H1 (cell line): ENCODE measurements at regions of chr12 and their contacts with region 1.

Region 1: GRCh38 chr12:53031617-53032016 is 18.2 kb upstream of the TNS2 start:
- DNase-seq: no peak
- H3K4me3 ChIP-seq: no peak overlapping the region
- H3K27ac ChIP-seq: no peak overlapping the region
- H3K4me1 ChIP-seq: no peaks in the 10 kb centered on the region
- H3K27me3 ChIP-seq: no peaks in the 10 kb centered on the region
- CTCF ChIP-seq: no peak
- EP300 ChIP-seq: no peak
- POLR2A ChIP-seq: no peak
- RAD21 ChIP-seq: no peak

Region 2: DNA sequence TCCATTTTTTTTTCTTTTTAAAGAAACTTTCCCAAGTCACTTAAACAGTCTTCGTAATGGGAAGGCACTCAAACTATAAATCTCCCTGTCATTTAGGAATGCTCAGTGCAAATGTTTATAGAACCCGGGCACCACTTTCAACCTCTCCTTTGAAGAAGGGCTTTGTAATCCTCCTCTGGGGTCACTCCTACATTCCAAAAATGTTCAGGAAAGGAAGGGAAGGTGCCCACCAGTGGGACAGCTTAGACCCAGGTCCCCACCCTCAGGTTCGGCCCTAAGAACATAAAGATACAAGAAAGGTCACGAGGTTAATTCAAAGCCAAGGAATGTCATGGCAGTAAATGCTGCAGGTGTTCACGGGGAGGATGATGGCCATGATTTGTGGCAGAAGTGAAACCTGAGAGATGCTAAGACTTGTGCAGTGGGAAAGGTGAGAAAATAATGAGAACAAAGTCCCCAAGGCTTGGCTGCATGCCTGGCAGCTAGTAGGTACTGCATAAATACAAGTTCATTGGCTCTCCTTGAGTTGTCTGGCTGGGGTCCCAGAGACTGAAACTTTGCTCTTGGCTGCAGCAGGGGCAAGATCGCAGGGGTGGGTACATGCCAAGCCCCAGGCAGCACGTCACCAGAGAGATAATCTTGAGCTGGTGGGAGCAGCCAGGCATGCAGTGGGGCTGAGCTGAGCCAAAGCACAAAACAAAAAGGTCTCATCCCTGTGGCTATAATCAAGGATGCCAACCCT is 61.6 kb before region 1 on chr12:
- CTCF ChIA-PET with region 1: no interaction called
- POLR2A ChIA-PET with region 1: no interaction called
- DNase-seq: no peak
- H3K4me3 ChIP-seq: no peak overlapping the region
- H3K27ac ChIP-seq: no peak overlapping the region
- H3K4me1 ChIP-seq: peaks cover 4 to 10% (median 7%) of the 10 kb centered on the region in 4 experiments
- H3K27me3 ChIP-seq: peaks cover 0 to 9% (median 5%) of the 10 kb centered on the region in 4 experiments; a peak in 3 of 7 replicates
- CTCF ChIP-seq: no peak
- EP300 ChIP-seq: no peak
- POLR2A ChIP-seq: no peak
- RAD21 ChIP-seq: no peak

Region 3: DNA sequence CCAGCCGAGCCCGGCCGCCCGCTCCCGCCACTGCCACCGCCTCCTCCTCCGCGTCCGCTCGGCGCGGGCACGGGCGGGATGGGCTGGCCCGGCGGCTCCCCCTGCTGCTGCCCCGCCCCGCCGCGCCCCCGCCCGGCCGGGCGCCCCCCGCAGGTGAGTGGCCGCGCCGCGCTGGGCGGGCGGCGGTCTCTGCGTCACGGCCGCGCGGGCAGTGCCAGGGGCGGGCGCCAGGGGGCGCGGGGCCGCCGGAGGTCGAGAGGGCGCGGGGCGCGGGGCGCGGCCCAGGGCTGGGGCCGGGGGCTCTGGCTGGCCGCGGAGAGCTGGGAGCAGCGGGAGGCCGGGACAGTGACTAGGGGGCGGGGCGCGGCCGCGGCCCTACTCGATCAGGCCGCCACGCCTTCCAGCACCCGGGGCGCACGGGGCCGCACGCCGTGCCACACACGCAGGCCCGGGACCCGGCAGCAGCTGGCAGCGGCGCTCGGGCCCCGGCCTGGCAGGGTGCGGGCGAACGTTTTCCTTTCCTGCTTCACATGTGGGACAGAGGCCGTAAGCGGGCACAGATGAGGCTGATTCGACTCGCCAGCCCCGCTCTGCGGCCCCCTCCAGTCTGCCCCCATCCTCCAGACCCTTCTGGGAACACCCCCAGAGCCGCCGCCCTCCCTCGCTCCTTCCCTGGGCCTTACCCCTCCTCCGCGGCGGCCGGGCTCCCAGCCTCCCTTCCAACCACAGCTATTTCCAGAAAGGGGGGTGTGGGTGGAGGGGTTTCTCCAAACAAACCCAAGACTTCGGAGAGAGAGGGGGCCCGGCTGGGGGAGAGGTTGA is 15.8 kb after region 1 on chr12:
- CTCF ChIA-PET with region 1: interaction called, 32 read pairs
- POLR2A ChIA-PET with region 1: interaction called, 63 read pairs
- DNase-seq: peak in 1 of 2 experiments; percentile 83
- H3K4me3 ChIP-seq: peak overlapping the region; percentile 34 to 94 (median 50); a peak in 6 of 8 replicates
- H3K27ac ChIP-seq: no peak overlapping the region
- H3K4me1 ChIP-seq: peaks cover 29 to 75% (median 53%) of the 10 kb centered on the region in 4 experiments
- H3K27me3 ChIP-seq: peaks cover 0 to 20% (median 17%) of the 10 kb centered on the region in 4 experiments; a peak in 6 of 7 replicates
- CTCF ChIP-seq: peak in 2 of 3 experiments; percentile 20 to 48; a peak in 3 of 4 replicates
- EP300 ChIP-seq: no peak
- POLR2A ChIP-seq: no peak
- RAD21 ChIP-seq: 0 out of 4 replicates have a peak, but pooled peaks of 1 of the 2 experiments have one; percentile 6

Region 4: GRCh38 chr12:53159195-53159839 is 127.7 kb after region 1 on chr12:
- CTCF ChIA-PET with region 1: no interaction called
- POLR2A ChIA-PET with region 1: no interaction called
- DNase-seq: peak in 1 of 2 experiments; percentile 97
- H3K4me3 ChIP-seq: peak overlapping the region in 1 of 4 experiments; percentile 45; a peak in 3 of 8 replicates
- H3K27ac ChIP-seq: no peak overlapping the region
- H3K4me1 ChIP-seq: peaks cover 0 to 3% (median 1%) of the 10 kb centered on the region in 4 experiments; a peak in 2 of 7 replicates
- H3K27me3 ChIP-seq: peaks cover 0 to 13% (median 7%) of the 10 kb centered on the region in 4 experiments; a peak in 5 of 7 replicates
- CTCF ChIP-seq: peak; percentile 96 to 100 (median 100)
- EP300 ChIP-seq: no peak
- POLR2A ChIP-seq: no peak
- RAD21 ChIP-seq: peak; percentile 81 to 87